Sciatic nerve (tissue), 2 donors: ENCODE measurements at regions of chr12 and their contacts with region 1.

Region 1: DNA sequence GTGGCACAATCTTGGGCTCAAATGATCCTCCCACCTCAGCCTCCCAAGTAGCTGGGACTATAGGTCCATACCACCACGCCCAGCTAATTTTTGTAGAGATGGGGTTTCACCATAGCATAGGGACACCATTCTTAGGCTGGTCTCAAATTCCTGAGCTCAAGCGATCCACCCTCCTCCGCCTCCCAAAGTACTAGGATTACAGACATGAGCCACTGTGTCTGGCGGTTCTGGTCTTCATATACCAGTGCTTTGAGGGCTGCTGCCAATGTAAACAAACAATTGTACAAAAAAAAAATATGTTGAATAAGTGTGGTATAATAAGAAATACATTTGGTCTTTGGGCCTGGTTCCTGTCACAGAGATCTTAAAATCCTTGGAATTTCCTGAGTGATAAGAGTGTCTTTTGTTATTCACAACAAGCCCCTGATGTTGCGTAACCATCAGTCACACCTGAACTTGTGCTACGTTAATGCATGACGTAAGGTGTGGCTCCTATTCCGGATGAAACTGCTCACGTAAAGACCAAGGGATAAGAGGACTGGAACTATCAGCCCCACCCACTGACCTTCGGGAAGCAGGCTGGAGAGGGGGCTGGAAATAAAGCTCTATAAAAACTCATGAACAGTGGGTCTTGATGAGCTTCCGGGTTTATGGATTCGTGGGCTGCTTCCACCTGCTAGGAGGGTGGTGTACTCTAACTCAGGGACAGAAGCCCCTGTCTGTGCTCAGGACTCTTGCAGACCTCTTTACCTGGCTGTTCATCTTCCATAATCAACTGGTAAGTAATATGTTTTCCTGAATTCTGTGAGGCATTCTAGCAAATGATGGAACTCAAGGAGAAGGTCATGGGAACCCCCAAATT is 16.5 kb upstream of the RIMKLB start:
- DNase-seq: no peak
- ATAC-seq: peak; percentile 64

Region 2: GRCh38 chr12:8860165-8860961 is 179.1 kb after region 1 on chr12:
- intact Hi-C with region 1: loop called (anchors 5 kb)
- DNase-seq: peak; percentile 69
- ATAC-seq: peak; percentile 90